ENCODE measurements at regions of chr10 and their contacts with region 1.

Region 1: DNA sequence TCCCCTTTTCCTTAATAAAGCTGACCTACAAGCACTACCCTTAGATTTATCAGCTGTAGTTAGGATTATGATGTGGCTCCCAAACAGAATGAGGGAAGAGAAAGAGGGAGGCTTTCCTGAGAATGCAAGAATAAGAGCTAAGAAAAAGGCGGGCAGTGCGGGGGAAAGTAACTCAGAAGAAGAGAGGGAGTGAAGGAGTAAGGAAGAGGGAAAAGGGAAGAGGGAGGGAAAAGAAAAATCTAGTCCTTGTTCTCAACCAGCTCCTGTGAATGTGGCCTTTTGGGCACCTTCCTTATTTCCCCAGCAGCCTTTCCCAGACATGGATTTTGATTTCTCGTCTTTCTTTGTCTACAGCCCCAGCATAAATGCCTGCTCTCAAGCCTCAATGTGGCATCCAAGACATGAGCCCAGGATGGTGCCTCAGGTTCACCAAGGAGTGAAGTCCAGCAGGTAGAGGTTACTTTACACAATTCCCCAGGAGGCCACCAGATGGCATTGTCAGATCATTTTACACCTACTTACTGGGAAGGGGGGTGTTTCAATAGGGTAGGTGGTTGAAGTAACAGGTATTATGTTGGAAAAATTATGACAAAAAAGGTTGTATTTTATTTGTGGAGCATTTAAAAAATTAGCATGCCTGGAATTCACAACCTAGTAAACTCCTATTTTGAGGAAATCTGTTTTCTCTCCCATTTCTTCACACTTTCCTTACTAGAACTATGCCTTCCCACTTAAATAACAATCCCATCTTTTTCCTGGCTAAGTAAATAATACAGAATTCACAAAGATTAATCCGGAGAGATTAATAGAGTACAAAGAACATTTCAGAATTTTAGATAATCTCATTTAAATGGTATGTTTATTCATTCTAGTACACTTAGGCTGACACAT is 106.5 kb downstream of the HTR7 start:
- DNase-seq: peak in 3 of 10 donors; percentile 7 to 30 (median 21)
- H3K4me3 ChIP-seq: no peak overlapping the region
- H3K27ac ChIP-seq: no peak overlapping the region
- H3K27me3 ChIP-seq: peaks cover 0 to 37% (median 0%) of the 10 kb centered on the region in 45 donors
- CTCF ChIP-seq: peak; percentile 26 to 81 (median 66)

Region 2: DNA sequence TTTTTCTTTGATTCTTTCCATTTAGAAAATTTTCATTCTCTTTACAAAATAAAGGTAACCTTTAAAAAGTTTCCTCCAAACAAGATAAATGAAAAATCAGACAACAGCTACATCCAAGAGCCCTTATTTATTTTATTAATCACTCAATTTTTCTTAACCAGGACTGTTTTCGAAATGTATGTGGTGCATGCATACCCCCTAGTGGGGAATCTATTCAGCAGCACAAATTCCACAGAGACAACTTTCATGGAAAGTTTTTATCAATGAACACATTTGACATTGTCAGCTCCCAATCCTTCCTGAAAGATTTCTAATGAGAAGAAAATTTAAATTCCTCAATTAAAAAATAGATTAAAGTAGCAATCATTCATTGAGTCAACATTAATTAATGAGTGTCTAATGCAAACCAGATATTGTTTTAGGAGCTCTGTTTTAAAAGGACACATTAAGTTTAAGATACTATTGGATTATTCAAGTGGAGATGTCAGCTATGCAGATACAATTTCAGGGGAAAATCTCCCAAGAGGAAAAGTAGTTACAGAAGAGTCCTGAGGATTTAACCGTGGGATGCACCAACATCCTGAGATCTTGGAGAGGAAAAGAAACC is 111.7 kb after region 1 on chr10:
- intact Hi-C with region 1: loop called in 1 of 2 experiments (anchors 5 kb)
- DNase-seq: no peak
- H3K4me3 ChIP-seq: no peak overlapping the region
- H3K27ac ChIP-seq: no peak overlapping the region
- H3K27me3 ChIP-seq: peaks cover 0 to 13% (median 0%) of the 10 kb centered on the region in 45 donors
- CTCF ChIP-seq: peak; percentile 51 to 85 (median 70)

Measured in dorsolateral prefrontal cortex (tissue), 120 donors.